ENCODE measurements at regions of chr11 and their contacts with region 1.

Region 1: DNA sequence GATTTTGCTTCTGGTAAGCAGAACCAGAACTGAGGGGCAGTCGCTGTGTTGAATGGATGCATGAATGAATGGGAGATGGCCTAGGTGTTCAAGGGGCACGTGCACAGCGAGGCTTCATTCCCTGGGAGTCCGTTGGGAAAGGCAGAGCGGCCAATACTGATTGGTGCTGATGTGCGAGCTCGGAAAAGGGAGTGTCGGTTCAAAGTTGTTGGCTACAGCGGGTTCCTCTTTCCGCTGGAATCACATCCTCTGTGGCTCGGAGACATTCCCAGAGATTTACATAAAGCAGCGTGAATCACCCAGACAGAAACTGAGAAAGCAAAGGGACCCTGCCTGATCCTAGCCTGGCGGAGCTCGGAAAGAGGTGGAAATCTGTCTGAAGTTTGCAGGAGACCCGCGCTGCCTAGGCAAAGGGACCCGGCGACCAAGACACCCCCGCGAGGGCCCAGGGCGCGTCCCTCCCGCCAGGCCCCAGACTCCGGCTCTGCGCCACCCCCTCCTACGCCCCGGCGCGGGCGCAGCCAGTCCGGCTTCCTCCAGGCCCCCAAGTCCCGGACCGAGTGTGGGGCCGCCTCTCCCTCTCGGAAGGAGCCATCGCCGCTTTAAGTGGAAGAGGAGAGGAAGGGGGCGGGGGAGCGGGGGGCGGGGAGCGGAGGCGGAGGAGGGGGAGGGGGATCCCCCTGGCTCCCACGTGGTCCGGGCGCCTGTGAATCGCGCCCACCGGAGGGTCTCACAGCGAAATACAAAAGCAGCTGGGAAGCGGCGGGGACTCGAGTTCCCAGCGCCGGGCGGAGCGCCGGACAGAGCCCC is at the start of gene FJX1:
- DNase-seq: no peak
- H3K4me3 ChIP-seq: no peak within 1 kb of the TSS
- H3K27ac ChIP-seq: no peak within 1 kb of the TSS
- H3K4me1 ChIP-seq: no peaks in the 10 kb centered on the region
- CTCF ChIP-seq: no peak
- total RNA-seq, gene FJX1: not detected in 2 replicates

Region 2: GRCh38 chr11:35822815-35823495 is 205.1 kb after region 1 on chr11:
- CTCF ChIA-PET with region 1: no interaction called
- POLR2A ChIA-PET with region 1: no interaction called
- intact Hi-C with region 1: loop called (anchors 2 kb)
- DNase-seq: no peak
- H3K4me3 ChIP-seq: no peak overlapping the region
- H3K27ac ChIP-seq: no peak overlapping the region
- H3K4me1 ChIP-seq: no peaks in the 10 kb centered on the region
- CTCF ChIP-seq: no peak

Region 3: GRCh38 chr11:36131721-36132397 is 514.0 kb after region 1 on chr11:
- CTCF ChIA-PET with region 1: no interaction called
- POLR2A ChIA-PET with region 1: interaction called, 3 read pairs
- intact Hi-C with region 1: loop called (anchors 1 kb)
- DNase-seq: peak; percentile 53
- H3K4me3 ChIP-seq: no peak overlapping the region
- H3K27ac ChIP-seq: no peak overlapping the region
- H3K4me1 ChIP-seq: no peaks in the 10 kb centered on the region
- CTCF ChIP-seq: peak; percentile 84

Region 4: DNA sequence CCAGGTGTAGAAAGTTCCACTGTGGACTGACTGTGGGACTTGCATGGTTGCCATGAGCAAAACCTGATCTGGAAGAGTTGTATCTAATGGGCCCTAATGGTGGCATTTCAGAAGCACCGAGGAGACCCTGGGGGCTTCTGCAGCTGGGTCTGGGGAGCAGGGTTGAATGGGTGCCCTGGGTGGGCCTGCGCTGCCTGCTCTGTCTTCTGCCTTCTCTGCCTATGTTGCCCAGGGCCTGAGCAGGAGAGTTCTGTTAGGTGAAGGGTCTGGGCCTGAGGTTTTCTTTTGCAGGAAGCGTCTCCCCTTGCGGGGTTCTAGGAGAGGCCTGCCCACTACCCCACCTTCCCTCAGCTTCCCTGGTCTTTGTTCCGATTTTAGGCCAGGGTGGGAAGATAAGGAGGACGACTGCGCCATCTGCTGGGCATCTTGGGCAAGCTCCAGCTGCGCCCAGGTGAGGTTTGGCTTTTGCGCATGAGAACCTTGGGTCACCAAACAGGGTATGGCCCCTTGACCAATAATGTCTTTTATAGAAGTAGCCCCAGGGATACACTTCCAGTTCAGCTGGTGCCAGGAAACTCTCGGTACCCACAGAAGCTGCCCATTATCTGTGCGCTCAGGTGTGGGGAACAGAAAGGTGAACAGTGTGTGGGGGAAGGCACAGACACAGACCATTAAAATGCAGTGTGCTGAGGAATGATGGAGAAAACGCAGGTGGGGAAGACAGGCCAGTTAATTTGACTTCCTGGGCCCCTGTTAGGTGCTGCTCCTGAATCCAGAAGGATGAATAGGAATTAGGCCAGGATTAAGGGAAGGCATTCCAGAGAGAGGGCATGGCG is 648.1 kb after region 1 on chr11:
- CTCF ChIA-PET with region 1: no interaction called
- POLR2A ChIA-PET with region 1: no interaction called
- intact Hi-C with region 1: loop called (anchors 1 kb)
- DNase-seq: peak; percentile 44
- H3K4me3 ChIP-seq: no peak overlapping the region
- H3K27ac ChIP-seq: no peak overlapping the region
- H3K4me1 ChIP-seq: no peaks in the 10 kb centered on the region
- CTCF ChIP-seq: peak; percentile 92

Measured in OCI-LY7 (cell line).